Activated CD4-positive, alpha-beta T cell treated with anti-CD3 and anti-CD28 coated beads for 36 hours (primary cell): ENCODE measurements at regions of chr10 and their contacts with region 1.

Region 1: GRCh38 chr10:62422068-62422590 is 48.0 kb downstream of the ZNF365 start:
- DNase-seq: no peak
- ATAC-seq: no peak
- H3K4me3 Mint-ChIP-seq: no peak overlapping the region
- H3K27ac Mint-ChIP-seq: no peak overlapping the region
- H3K4me1 Mint-ChIP-seq: peaks cover 23% of the 10 kb centered on the region
- H3K27me3 Mint-ChIP-seq: peaks cover 10% of the 10 kb centered on the region

Region 2: DNA sequence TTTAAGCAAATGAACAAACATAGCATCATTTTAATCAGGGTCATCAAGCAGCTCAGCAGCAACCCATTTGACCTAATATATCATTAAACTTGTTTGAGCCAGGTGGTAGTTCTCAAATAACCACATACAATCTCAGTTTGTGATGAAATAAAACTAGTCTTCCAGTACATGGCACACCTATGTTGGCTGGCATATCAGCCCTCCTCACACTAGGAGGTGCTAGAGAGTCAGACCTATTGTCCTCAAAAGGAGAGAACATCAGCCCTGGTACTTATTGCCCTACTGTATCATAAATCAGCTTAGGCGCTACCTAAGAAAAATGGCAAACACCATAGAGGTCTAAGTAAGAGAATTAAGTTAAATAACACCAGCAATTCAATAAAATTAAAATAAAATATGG is 677.7 kb before region 1 on chr10:
- CTCF ChIA-PET with region 1: no interaction called
- POLR2A ChIA-PET with region 1: no interaction called
- intact Hi-C with region 1: loop called in 1 of 2 experiments (anchors 10 kb)
- DNase-seq: peak; percentile 40
- ATAC-seq: peak; percentile 66
- H3K4me3 Mint-ChIP-seq: no peak overlapping the region
- H3K27ac Mint-ChIP-seq: no peak overlapping the region
- H3K4me1 Mint-ChIP-seq: no peaks in the 10 kb centered on the region
- H3K27me3 Mint-ChIP-seq: no peaks in the 10 kb centered on the region

Region 3: GRCh38 chr10:62038609-62039190 is 383.4 kb before region 1 on chr10:
- CTCF ChIA-PET with region 1: interaction called, 3 read pairs
- POLR2A ChIA-PET with region 1: no interaction called
- intact Hi-C with region 1: loop called in 1 of 2 experiments (anchors 5 kb)
- DNase-seq: peak; percentile 87
- ATAC-seq: peak; percentile 60
- H3K4me3 Mint-ChIP-seq: peak overlapping the region; percentile 45
- H3K27ac Mint-ChIP-seq: peak overlapping the region; percentile 92
- H3K4me1 Mint-ChIP-seq: peaks cover 87% of the 10 kb centered on the region
- H3K27me3 Mint-ChIP-seq: no peaks in the 10 kb centered on the region

Region 4: DNA sequence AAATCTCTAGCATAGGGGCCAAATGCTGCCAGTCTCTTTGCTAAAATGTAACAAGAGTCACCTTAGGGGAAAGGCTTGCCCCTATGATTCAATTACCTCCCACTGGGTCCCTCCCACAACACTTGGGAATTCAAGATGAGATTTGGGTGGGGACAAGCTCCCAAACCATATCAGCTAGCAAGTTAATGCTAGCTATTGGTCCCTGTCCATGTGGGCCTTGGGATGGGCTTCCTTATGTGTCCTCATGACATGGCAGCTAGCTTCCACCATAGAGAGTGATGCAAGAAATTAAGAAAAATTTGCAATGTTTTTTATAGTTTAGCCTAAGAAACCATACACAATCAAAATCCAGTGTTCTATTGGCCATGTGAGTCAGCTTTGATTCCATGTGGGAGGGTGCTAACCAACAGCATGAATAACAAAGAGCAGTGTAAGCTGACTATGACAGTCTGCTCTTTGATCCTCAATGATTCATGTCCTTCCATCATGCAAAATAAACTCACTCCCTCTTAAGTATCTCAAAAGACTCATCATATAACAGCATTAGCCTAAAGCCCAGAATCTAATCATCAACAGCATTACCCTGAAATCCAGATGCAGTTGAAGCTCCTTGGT is 69.7 kb before region 1 on chr10:
- CTCF ChIA-PET with region 1: no interaction called
- POLR2A ChIA-PET with region 1: no interaction called
- intact Hi-C with region 1: loop called in 1 of 2 experiments (anchors 5 kb)
- DNase-seq: peak; percentile 56
- ATAC-seq: peak; percentile 97
- H3K4me3 Mint-ChIP-seq: no peak overlapping the region
- H3K27ac Mint-ChIP-seq: peak overlapping the region; percentile 86
- H3K4me1 Mint-ChIP-seq: peaks cover 21% of the 10 kb centered on the region
- H3K27me3 Mint-ChIP-seq: peaks cover 8% of the 10 kb centered on the region

Region 5: GRCh38 chr10:62511656-62512055 is 89.5 kb after region 1 on chr10:
- CTCF ChIA-PET with region 1: no interaction called
- POLR2A ChIA-PET with region 1: no interaction called
- intact Hi-C with region 1: no loop called
- DNase-seq: no peak
- ATAC-seq: no peak
- H3K4me3 Mint-ChIP-seq: no peak overlapping the region
- H3K27ac Mint-ChIP-seq: no peak overlapping the region
- H3K4me1 Mint-ChIP-seq: peaks cover 2% of the 10 kb centered on the region
- H3K27me3 Mint-ChIP-seq: peaks cover 7% of the 10 kb centered on the region

Region 6: DNA sequence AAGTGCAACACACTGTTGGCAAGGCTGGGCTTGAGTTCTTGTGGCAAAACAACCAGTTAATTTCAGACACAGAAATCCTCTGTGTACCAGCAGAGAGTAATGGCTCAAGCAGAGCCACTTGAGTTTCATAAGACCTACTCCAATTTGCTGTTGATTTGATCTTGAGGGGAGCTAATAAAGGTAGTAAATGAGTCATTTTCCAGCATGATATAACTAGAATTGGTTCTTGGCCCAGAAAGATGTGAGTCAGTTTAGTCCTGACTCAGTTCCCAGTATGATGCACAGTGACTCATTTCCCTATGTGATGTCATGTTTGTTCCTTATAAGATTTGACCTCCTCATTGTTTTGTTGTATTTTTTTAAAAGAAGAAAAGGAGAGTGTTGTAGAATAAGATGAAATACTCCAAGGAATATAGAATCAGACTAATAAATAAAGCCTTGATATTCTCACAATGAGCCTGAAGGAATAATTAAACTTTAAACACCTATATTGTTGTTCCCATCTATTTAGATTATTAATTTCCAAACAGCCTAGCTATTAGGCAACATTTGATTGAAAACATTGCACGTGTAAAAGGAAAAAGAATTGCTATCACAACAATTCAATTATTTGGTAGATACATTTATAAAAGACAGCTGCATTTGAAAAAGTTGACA is 1285.3 kb after region 1 on chr10:
- CTCF ChIA-PET with region 1: no interaction called
- POLR2A ChIA-PET with region 1: no interaction called
- intact Hi-C with region 1: loop called in 1 of 2 experiments (anchors 5 kb)
- DNase-seq: peak; percentile 39
- ATAC-seq: peak; percentile 94
- H3K4me3 Mint-ChIP-seq: no peak overlapping the region
- H3K27ac Mint-ChIP-seq: no peak overlapping the region
- H3K4me1 Mint-ChIP-seq: peaks cover 19% of the 10 kb centered on the region
- H3K27me3 Mint-ChIP-seq: no peaks in the 10 kb centered on the region